Endothelial cell of umbilical vein (primary cell): ENCODE measurements at regions of chr10 and their contacts with region 1.

Region 1: DNA sequence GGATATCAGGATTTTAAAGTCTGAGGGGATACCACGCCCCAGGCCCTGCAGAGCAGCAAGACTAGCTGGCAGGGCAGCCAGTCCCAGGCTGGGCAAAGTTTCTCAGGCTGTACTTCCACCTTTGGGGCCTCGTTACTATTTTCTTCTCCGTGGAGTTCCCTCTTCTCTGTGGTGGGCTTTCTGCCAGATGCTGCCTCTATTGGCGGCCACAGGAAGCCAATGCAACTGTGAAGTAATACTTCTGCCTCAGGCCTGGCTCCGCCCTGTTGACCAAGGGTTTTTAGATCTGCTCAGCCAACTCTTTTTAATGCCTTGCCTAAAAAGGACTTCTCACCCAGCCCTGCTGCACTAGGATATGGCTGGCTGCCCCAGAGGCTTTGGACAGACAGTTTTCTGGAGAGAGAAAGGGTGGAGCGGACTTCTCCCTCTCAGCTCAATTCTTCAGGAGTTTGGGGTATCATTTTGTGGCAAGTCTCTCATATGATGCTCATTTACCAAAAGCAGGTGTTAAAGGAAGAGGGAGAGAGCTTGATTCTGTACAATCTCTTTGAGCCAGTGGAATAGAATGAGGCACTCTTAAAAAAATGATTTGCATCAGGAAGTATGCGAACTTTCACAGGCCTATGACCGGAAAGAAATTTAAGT is 67.4 kb downstream of the HHEX start:
- DNase-seq: peak; percentile 93
- H3K4me3 ChIP-seq: peak overlapping the region in 1 of 3 experiments; percentile 41
- H3K27ac ChIP-seq: peak overlapping the region; percentile 98
- H3K4me1 ChIP-seq: peaks cover 46% of the 10 kb centered on the region
- H3K27me3 ChIP-seq: no peaks in the 10 kb centered on the region
- CTCF ChIP-seq: peak in 1 of 2 donors; percentile 18
- POLR2A ChIP-seq: no peak

Region 2: GRCh38 chr10:92640110-92640509 is 117.1 kb before region 1 on chr10:
- CTCF ChIA-PET with region 1: no interaction called
- POLR2A ChIA-PET with region 1: no interaction called
- dilution Hi-C with region 1: no loop called
- intact Hi-C with region 1: no loop called
- DNase-seq: peak; percentile 92
- H3K4me3 ChIP-seq: no peak overlapping the region
- H3K27ac ChIP-seq: peak overlapping the region; percentile 48
- H3K4me1 ChIP-seq: peaks cover 18% of the 10 kb centered on the region
- H3K27me3 ChIP-seq: no peaks in the 10 kb centered on the region
- CTCF ChIP-seq: no peak
- POLR2A ChIP-seq: peak; percentile 26

Region 3: GRCh38 chr10:92699518-92700381 is 57.4 kb before region 1 on chr10:
- CTCF ChIA-PET with region 1: interaction called, 6 read pairs
- POLR2A ChIA-PET with region 1: no interaction called
- dilution Hi-C with region 1: no loop called
- intact Hi-C with region 1: loop called (anchors 2 kb)
- DNase-seq: peak; percentile 69
- H3K4me3 ChIP-seq: peak overlapping the region; percentile 6 to 48 (median 37)
- H3K27ac ChIP-seq: peak overlapping the region; percentile 77
- H3K4me1 ChIP-seq: peaks cover 42% of the 10 kb centered on the region
- H3K27me3 ChIP-seq: no peaks in the 10 kb centered on the region
- CTCF ChIP-seq: no peak
- POLR2A ChIP-seq: peak; percentile 42

Region 4: DNA sequence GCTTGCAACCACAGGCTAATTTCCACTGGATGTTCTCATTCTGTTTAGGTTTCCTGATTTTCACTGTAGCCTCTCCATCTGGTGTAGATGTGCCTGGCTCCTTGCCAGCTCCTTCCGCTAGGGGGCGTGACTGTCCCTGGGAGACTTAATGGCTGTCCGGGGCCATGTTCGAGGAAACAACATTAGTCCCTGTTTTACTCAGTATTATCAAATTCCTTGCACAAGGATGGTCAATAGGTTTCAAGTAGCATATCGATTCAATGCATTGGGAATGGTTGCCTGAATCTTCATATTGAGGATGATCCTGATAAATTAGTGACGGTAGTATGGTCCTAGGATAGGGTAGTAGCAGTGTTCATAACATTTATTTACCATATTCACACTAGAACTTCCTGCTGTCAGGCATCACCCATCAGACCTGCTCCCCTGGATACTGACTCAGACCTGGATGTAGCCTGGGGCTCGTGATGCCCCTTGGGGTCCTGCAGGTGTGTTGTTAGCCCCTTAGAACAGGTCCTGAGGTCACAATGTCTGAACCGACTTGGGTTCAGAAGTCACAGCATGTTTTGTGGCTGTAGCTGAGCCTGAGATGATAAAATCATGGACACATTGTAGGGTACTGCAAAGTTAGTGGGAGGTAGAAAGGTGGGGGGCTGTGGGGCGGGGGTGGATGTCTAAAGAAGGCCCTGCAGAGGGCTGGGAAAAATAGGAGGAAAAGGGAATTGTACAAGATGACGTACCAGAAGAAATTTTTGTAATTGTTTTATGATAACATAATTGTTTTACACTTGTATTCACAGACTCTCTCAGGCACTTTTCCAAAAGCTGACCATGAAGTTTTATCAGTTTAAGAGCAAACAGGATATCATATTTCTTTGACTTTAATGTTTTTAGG is 82.2 kb after region 1 on chr10:
- CTCF ChIA-PET with region 1: interaction called, 10 read pairs
- POLR2A ChIA-PET with region 1: interaction called, 3 read pairs
- dilution Hi-C with region 1: no loop called
- intact Hi-C with region 1: loop called (anchors 1 kb)
- DNase-seq: peak; percentile 97
- H3K4me3 ChIP-seq: peak overlapping the region in 1 of 3 experiments; percentile 2
- H3K27ac ChIP-seq: peak overlapping the region; percentile 97
- H3K4me1 ChIP-seq: peaks cover 76% of the 10 kb centered on the region
- H3K27me3 ChIP-seq: no peaks in the 10 kb centered on the region
- CTCF ChIP-seq: peak; percentile 26 to 31
- POLR2A ChIP-seq: no peak

Region 5: DNA sequence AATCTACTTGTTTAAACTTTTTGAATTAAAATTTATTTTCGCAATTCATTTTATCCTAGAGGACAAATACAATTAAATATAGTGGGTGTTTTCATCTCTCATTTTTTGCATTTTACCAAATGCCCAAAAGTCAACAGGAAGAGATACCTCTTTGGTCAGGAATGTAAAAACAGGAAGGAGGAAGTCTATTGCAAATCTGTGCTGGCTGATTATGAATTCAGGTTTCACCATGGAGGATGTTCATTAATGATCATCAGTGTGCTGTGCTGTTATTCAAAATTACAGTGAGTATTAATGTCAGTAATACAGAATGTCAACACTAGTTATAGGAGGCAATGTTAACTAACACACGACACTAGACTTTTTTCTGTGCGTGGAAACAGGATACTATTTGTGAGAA is 115.8 kb after region 1 on chr10:
- CTCF ChIA-PET with region 1: no interaction called
- POLR2A ChIA-PET with region 1: no interaction called
- dilution Hi-C with region 1: no loop called
- intact Hi-C with region 1: loop called (anchors 1 kb)
- DNase-seq: peak; percentile 92
- H3K4me3 ChIP-seq: peak overlapping the region in 1 of 3 experiments; percentile 40
- H3K27ac ChIP-seq: peak overlapping the region; percentile 72
- H3K4me1 ChIP-seq: peaks cover 68% of the 10 kb centered on the region
- H3K27me3 ChIP-seq: no peaks in the 10 kb centered on the region
- CTCF ChIP-seq: no peak
- POLR2A ChIP-seq: peak; percentile 62